OCI-LY7 (cell line): ENCODE measurements at regions of chr13 and their contacts with region 1.

Region 1: DNA sequence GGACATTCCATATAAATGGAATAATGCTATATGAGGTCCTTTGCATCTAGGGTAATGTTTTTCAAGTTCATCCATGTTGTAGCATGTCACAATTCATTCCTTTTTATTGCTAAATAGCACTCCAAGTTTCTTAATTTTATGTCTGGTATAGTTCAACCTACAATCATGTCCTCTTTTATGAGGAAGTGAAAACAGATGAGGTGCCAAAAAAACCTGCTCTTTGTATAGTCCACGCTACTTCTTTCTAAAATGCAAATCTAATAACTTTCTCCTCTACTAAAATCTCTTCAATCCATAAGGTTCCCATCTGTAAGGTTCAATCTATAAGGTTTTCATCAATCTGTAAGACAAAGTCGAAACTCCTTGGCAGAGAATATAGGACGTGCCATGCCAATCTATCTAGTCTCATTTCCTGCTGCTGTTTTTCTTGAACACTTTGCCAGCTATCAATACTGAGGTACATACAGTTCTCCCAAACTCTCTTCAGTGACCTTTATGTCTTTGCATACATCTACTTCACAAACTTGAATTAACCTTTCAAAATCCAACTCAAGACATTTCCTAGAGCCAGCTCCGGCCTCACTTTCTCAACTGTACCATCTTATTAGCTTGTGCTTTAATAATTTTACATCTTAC is 33.7 kb downstream of the INTS6 start:
- DNase-seq: peak; percentile 67
- H3K4me3 ChIP-seq: peak overlapping the region; percentile 59
- H3K27ac ChIP-seq: peak overlapping the region; percentile 90
- H3K4me1 ChIP-seq: peaks cover 70% of the 10 kb centered on the region
- CTCF ChIP-seq: no peak

Region 2: DNA sequence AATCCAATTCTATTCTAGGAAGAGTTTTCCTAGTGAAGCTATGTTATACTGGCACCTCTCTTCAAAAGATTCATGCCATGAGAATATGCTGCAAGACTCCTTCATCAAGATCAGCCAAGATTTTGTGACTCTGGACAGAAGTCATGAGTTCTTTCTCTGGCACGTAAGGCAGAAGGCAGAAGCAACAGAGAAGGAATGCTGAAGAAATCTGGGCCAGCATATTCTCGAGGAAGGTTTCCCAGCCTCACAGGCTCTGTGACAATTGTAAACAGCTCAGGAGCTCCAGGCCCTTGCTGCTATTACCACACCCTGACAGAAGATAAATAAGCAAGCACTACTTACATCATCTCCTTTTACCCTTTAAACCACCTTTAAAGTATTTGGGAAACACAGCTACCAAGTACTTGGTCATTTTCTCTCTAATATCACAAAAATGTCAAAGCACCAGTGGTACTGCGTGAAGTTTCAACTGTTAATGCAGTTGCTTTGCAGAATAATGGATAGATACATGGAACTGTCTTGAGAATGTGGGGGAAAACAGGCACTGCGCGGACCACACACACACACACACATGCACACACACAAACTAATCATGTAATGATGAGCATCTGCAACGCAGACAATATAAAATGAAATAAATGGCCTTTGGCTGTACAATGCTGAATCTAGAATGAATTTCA is 21.7 kb before region 1 on chr13:
- CTCF ChIA-PET with region 1: no interaction called
- POLR2A ChIA-PET with region 1: interaction called, 14 read pairs
- intact Hi-C with region 1: no loop called
- DNase-seq: no peak
- H3K4me3 ChIP-seq: no peak overlapping the region
- H3K27ac ChIP-seq: no peak overlapping the region
- H3K4me1 ChIP-seq: peaks cover 16% of the 10 kb centered on the region
- CTCF ChIP-seq: no peak

Region 3: DNA sequence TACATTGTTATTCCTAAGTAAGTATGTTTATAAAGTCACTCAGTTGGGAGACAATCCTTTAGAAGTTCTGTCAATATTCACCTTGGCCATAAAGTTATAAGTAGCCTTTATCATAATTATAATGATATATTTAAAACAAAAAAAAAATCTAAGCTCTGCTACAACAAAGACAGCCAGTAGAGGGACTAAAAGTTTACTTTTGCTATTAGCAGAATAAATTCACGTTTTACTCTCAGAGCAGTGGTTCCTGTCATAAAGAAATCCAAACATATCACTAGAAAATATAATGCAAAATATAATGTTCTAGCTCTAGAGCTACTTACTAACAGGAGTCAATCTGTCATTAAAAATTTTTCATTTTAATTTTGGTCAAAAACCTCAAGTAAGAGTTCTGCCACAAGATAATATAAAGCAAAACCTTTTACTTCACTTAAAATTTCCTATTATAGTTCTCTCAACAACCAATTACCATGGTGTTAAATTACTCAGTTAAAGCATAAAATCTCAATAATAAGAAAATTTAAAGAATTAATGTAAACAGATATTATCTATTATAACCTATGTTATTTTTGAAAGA is 16.0 kb after region 1 on chr13:
- CTCF ChIA-PET with region 1: interaction called, 4 read pairs
- POLR2A ChIA-PET with region 1: interaction called, 23 read pairs
- intact Hi-C with region 1: no loop called
- DNase-seq: peak; percentile 45
- H3K4me3 ChIP-seq: no peak overlapping the region
- H3K27ac ChIP-seq: no peak overlapping the region
- H3K4me1 ChIP-seq: no peaks in the 10 kb centered on the region
- CTCF ChIP-seq: peak; percentile 83

Region 4: DNA sequence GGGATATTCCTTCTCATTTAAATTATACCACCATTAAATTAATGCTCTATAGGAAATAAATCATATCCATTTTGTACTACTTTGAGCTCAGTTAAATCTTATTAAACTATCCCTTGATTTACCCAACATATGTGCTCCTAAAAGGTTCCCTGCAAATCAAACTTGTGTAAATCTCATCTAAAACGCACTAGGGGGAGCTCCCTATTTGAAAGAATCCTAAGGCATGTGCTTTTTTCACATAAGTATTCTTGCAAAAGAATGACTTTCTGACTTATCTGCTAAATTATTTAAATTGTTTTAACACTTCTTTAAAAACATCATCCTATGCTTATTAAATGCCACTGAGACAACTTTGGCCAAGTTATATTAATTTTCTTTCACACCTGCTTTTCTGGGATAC is 25.8 kb after region 1 on chr13:
- CTCF ChIA-PET with region 1: no interaction called
- POLR2A ChIA-PET with region 1: interaction called, 23 read pairs
- intact Hi-C with region 1: no loop called
- DNase-seq: no peak
- H3K4me3 ChIP-seq: no peak overlapping the region
- H3K27ac ChIP-seq: no peak overlapping the region
- H3K4me1 ChIP-seq: peaks cover 2% of the 10 kb centered on the region
- CTCF ChIP-seq: peak; percentile 67

Region 5: DNA sequence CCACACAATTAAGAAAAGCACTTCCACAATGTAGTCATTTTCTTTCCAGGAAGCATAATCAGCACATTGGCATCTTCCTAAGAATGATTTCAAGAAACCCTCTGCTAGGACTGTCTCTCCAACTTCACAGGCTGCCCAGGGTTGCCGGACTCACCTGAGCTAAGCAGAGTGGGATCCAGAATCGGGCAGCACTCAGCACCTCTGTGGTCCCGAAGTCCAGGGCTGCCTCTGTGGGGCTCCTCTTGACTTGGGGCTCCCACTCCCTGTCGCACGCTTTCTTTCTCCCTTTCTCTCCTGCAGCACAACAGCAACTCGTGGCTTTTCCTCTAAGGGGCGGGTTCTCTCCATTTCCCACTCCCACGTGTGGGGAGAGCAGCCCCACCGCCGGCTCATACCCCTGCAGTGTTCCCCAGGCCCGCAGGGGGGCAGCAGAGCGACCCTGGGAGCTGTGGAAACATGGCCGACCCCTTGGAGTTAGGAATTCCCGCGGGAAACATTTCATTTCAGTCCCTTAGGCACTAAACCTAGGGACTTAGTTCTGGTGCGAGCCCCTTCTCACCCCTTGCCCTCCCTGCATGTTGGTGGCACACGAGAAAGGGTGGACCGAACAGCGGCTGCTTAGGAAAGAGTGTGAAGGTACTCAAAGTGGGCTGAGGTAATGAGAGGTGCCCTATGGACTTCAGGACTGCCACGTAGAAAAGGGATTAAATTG is 425.9 kb after region 1 on chr13 and contains the start of gene TMEM272:
- CTCF ChIA-PET with region 1: no interaction called
- POLR2A ChIA-PET with region 1: no interaction called
- intact Hi-C with region 1: no loop called
- DNase-seq: peak; percentile 41
- H3K4me3 ChIP-seq: no peak within 1 kb of the TSS
- H3K27ac ChIP-seq: no peak within 1 kb of the TSS
- H3K4me1 ChIP-seq: peaks cover 3% of the 10 kb centered on the region
- CTCF ChIP-seq: peak; percentile 92
- total RNA-seq, gene TMEM272: 0.41 and 0.75 TPM in 2 replicates

Region 6: GRCh38 chr13:52061587-52061986 is 642.5 kb after region 1 on chr13:
- CTCF ChIA-PET with region 1: no interaction called
- POLR2A ChIA-PET with region 1: interaction called, 10 read pairs
- intact Hi-C with region 1: no loop called
- DNase-seq: no peak
- H3K4me3 ChIP-seq: no peak overlapping the region
- H3K27ac ChIP-seq: no peak overlapping the region
- H3K4me1 ChIP-seq: no peaks in the 10 kb centered on the region
- CTCF ChIP-seq: no peak